ENCODE measurements at regions of chr5 and their contacts with region 1.

Region 1: GRCh38 chr5:111512375-111513130 is at the start of gene STARD4:
- DNase-seq: peak; percentile 90 to 98
- H3K4me3 ChIP-seq: peak within 1 kb of the TSS; percentile 89 to 90
- H3K27ac ChIP-seq: peak within 1 kb of the TSS; percentile 86 to 89
- H3K4me1 ChIP-seq: peaks cover 0 to 2% of the 10 kb centered on the region in 2 donors
- H3K27me3 ChIP-seq: no peaks in the 10 kb centered on the region
- CTCF ChIP-seq: no peak
- total RNA-seq, gene STARD4: 1.5 TPM

Region 2: GRCh38 chr5:110738812-110739651 is 773.5 kb before region 1 on chr5 and contains the start of gene SLC25A46:
- intact Hi-C with region 1: loop called (anchors 10 kb)
- DNase-seq: peak; percentile 63 to 94
- H3K4me3 ChIP-seq: peak within 1 kb of the TSS; percentile 85 to 98
- H3K27ac ChIP-seq: peak within 1 kb of the TSS; percentile 78 to 87
- H3K4me1 ChIP-seq: peaks cover 2 to 3% of the 10 kb centered on the region in 2 donors
- H3K27me3 ChIP-seq: no peaks in the 10 kb centered on the region
- CTCF ChIP-seq: no peak
- total RNA-seq, gene SLC25A46: 22.1 TPM

Region 3: DNA sequence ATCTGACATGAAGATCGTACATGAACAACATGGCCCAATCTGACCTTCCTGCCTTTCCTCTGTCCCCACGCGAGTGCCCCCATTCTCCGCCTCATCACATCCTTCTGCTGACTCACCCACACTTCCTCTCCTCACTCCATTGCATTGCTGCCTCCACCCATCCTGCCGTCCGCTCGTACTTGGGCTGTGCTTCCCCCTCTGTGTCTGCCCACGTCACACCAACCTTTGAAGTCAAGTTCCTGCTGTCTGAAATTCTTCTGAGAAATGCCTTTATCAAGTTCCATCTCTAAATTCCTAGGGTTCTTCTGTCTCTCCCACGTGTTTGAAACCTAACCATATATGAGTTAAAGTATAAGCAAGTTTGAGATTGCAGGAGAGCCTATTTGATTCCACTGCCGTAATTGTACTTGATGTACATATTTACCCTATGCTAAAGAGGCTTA is 17.8 kb after region 1 on chr5:
- intact Hi-C with region 1: loop called (anchors 2 kb)
- DNase-seq: peak; percentile 57 to 86
- H3K4me3 ChIP-seq: no peak overlapping the region
- H3K27ac ChIP-seq: no peak overlapping the region
- H3K4me1 ChIP-seq: peaks cover 0 to 2% of the 10 kb centered on the region in 2 donors
- H3K27me3 ChIP-seq: no peaks in the 10 kb centered on the region
- CTCF ChIP-seq: no peak

Region 4: GRCh38 chr5:111932628-111933027 is 420.1 kb after region 1 on chr5:
- intact Hi-C with region 1: no loop called
- DNase-seq: no peak
- H3K4me3 ChIP-seq: no peak overlapping the region
- H3K27ac ChIP-seq: no peak overlapping the region
- H3K4me1 ChIP-seq: peaks cover 4 to 8% of the 10 kb centered on the region in 2 donors
- H3K27me3 ChIP-seq: no peaks in the 10 kb centered on the region
- CTCF ChIP-seq: no peak